Ovary (tissue), 10 donors: ENCODE measurements at regions of chr10 and their contacts with region 1.

Region 1: GRCh38 chr10:43407576-43408330 is 1.2 kb downstream of the HNRNPF start:
- DNase-seq: peak; percentile 91 to 95 (median 92)
- H3K4me3 ChIP-seq: peak overlapping the region; percentile 66
- H3K27ac ChIP-seq: peak overlapping the region; percentile 98 to 99
- H3K4me1 ChIP-seq: peaks cover 8% of the 10 kb centered on the region
- H3K27me3 ChIP-seq: no peaks in the 10 kb centered on the region
- CTCF ChIP-seq: peak in 2 of 3 donors; percentile 31 to 45
- EP300 ChIP-seq: peak; percentile 89
- POLR2A ChIP-seq: peak; percentile 74

Region 2: GRCh38 chr10:42111076-42111475 is 1296.7 kb before region 1 on chr10:
- intact Hi-C with region 1: no loop called
- DNase-seq: no peak
- H3K4me3 ChIP-seq: no peak overlapping the region
- H3K27ac ChIP-seq: no peak overlapping the region
- H3K4me1 ChIP-seq: no peaks in the 10 kb centered on the region
- H3K27me3 ChIP-seq: no peaks in the 10 kb centered on the region
- CTCF ChIP-seq: no peak
- EP300 ChIP-seq: no peak
- POLR2A ChIP-seq: no peak

Region 3: GRCh38 chr10:43420369-43421200 is 12.8 kb after region 1 on chr10:
- intact Hi-C with region 1: loop called in 1 of 4 experiments (anchors 2 kb)
- DNase-seq: peak; percentile 87 to 92 (median 91)
- H3K4me3 ChIP-seq: peak overlapping the region; percentile 69
- H3K27ac ChIP-seq: peak overlapping the region; percentile 90
- H3K4me1 ChIP-seq: peaks cover 5% of the 10 kb centered on the region
- H3K27me3 ChIP-seq: no peaks in the 10 kb centered on the region
- CTCF ChIP-seq: no peak
- EP300 ChIP-seq: peak; percentile 57
- POLR2A ChIP-seq: peak; percentile 66